ENCODE measurements at regions of chr16 and their contacts with region 1.

Region 1: GRCh38 chr16:22109258-22109898 is 17.0 kb downstream of the VWA3A start:
- DNase-seq: no peak
- ATAC-seq: no peak
- H3K4me3 ChIP-seq: no peak overlapping the region
- H3K27ac ChIP-seq: no peak overlapping the region
- H3K4me1 ChIP-seq: no peaks in the 10 kb centered on the region
- H3K27me3 ChIP-seq: no peaks in the 10 kb centered on the region

Region 2: GRCh38 chr16:22161999-22162655 is 52.7 kb after region 1 on chr16 and contains the start of gene SDR42E2:
- intact Hi-C with region 1: loop called in 1 of 4 experiments (anchors 10 kb)
- DNase-seq: no peak
- ATAC-seq: peak; percentile 22 to 39
- H3K4me3 ChIP-seq: peak within 1 kb of the TSS; percentile 27
- H3K27ac ChIP-seq: no peak within 1 kb of the TSS
- H3K4me1 ChIP-seq: peaks cover 2% of the 10 kb centered on the region
- H3K27me3 ChIP-seq: no peaks in the 10 kb centered on the region
- total RNA-seq, gene SDR42E2: 0.09 TPM in 1 of 4 donors, not detected in the others